ENCODE measurements at regions of chr14 and their contacts with region 1.

Region 1: GRCh38 chr14:21852061-21852664 is 178.5 kb upstream of the OR4E1 start:
- DNase-seq: peak; percentile 50 to 80 (median 61)
- ATAC-seq: peak; percentile 78 to 85
- H3K4me3 Mint-ChIP-seq: peak overlapping the region; percentile 30 to 90 (median 83)
- H3K27ac Mint-ChIP-seq: peak overlapping the region in 9 of 10 donors; percentile 47 to 91 (median 79)
- H3K4me1 Mint-ChIP-seq: peaks cover 2 to 13% (median 10%) of the 10 kb centered on the region in 4 donors
- H3K27me3 Mint-ChIP-seq: peaks cover 1 to 23% (median 7%) of the 10 kb centered on the region in 5 donors

Region 2: GRCh38 chr14:21768116-21768874 is 83.9 kb before region 1 on chr14:
- POLR2A ChIA-PET with region 1: no interaction called
- DNase-seq: peak in 8 of 10 donors; percentile 7 to 69 (median 40)
- ATAC-seq: peak; percentile 89 to 93
- H3K4me3 Mint-ChIP-seq: peak overlapping the region; percentile 49 to 85 (median 72)
- H3K27ac Mint-ChIP-seq: peak overlapping the region in 9 of 10 donors; percentile 52 to 92 (median 79)
- H3K4me1 Mint-ChIP-seq: peaks cover 0 to 7% (median 0%) of the 10 kb centered on the region in 4 donors
- H3K27me3 Mint-ChIP-seq: peaks cover 0 to 14% (median 11%) of the 10 kb centered on the region in 5 donors

Region 3: GRCh38 chr14:21825149-21825743 is 26.9 kb before region 1 on chr14:
- POLR2A ChIA-PET with region 1: no interaction called
- DNase-seq: peak in 8 of 10 donors; percentile 24 to 71 (median 46)
- ATAC-seq: peak; percentile 97 to 98
- H3K4me3 Mint-ChIP-seq: peak overlapping the region; percentile 31 to 78 (median 58)
- H3K27ac Mint-ChIP-seq: peak overlapping the region in 6 of 10 donors; percentile 1 to 54 (median 36)
- H3K4me1 Mint-ChIP-seq: peaks cover 2 to 7% (median 5%) of the 10 kb centered on the region in 4 donors
- H3K27me3 Mint-ChIP-seq: peaks cover 19 to 38% (median 27%) of the 10 kb centered on the region in 5 donors

Region 4: DNA sequence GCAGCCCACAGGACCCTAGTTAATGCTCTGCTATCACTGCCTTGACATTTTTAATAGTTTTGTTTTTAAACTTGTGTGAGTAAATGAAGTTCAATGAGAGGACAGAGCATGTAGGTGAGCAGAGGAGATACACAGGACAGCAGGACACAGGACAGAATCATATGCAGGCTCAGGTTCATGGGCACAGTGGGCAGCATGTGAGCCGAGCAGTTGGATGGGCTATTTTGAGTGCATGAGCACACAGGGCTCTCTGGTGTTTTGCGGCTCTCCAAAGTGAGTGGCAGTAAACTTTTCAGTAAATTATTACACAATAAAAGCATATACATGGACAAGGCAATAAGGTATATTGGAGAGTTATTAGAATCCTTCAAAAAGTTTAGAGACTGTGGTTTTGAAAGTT is 11.1 kb after region 1 on chr14:
- POLR2A ChIA-PET with region 1: interaction called, 18 read pairs
- DNase-seq: no peak
- ATAC-seq: peak in 1 of 2 donors; percentile 20
- H3K4me3 Mint-ChIP-seq: peak overlapping the region; percentile 17 to 85 (median 69)
- H3K27ac Mint-ChIP-seq: peak overlapping the region in 6 of 10 donors; percentile 53 to 86 (median 64)
- H3K4me1 Mint-ChIP-seq: peaks cover 5 to 16% (median 10%) of the 10 kb centered on the region in 4 donors
- H3K27me3 Mint-ChIP-seq: peaks cover 0 to 12% (median 6%) of the 10 kb centered on the region in 5 donors